OCI-LY7 (cell line): ENCODE measurements at regions of chr13 and their contacts with region 1.

Region 1: DNA sequence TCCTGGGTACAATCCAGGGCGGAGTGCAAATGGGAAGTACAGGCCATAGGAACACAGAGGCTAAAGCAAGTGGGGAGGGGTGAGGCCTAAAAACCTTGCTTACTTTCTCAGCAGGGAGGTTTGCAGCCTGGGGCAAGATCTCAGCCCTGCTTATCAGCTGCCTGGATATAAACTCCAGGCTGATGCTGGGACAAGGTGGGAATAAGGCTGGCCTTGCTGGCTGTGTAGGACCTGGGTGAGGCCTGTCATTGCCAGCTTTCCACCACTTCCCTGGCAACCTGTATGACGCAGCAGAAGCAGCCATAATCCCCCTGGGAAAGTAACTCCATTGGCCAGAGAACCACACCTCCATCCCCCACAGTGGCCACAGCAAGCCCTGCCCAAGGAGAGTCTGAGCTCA is 279.1 kb upstream of the ATXN8OS start:
- DNase-seq: no peak
- H3K4me3 ChIP-seq: no peak overlapping the region
- H3K27ac ChIP-seq: no peak overlapping the region
- H3K4me1 ChIP-seq: no peaks in the 10 kb centered on the region
- CTCF ChIP-seq: no peak

Region 2: GRCh38 chr13:69769608-69770007 is 58.9 kb before region 1 on chr13:
- CTCF ChIA-PET with region 1: no interaction called
- POLR2A ChIA-PET with region 1: no interaction called
- intact Hi-C with region 1: no loop called
- DNase-seq: peak; percentile 3
- H3K4me3 ChIP-seq: no peak overlapping the region
- H3K27ac ChIP-seq: no peak overlapping the region
- H3K4me1 ChIP-seq: no peaks in the 10 kb centered on the region
- CTCF ChIP-seq: no peak

Region 3: DNA sequence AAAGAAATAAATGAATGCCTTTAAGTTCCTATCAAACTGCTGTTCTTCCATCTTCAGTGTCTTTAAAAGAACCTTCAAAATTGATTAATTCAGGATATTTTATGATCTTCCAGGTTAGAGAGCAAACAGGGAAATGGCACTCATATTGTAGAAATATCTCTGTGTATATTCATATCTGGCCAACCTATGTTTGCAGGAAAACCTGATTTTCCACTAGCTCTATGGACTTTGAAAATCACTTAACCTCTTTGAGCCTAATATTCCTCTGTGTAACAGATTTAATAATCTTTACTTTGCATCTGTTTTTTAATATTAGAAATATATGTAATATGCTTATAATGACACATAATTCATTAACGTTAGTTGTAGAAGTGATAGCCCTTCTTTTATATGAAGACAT is 51.4 kb after region 1 on chr13:
- CTCF ChIA-PET with region 1: no interaction called
- POLR2A ChIA-PET with region 1: no interaction called
- intact Hi-C with region 1: loop called (anchors 10 kb)
- DNase-seq: no peak
- H3K4me3 ChIP-seq: no peak overlapping the region
- H3K27ac ChIP-seq: no peak overlapping the region
- H3K4me1 ChIP-seq: no peaks in the 10 kb centered on the region
- CTCF ChIP-seq: no peak